ENCODE measurements at regions of chr6 and their contacts with region 1.

Region 1: GRCh38 chr6:137641474-137642077 is 147.4 kb upstream of the OLIG3 start:
- DNase-seq: peak; percentile 37 to 75
- ATAC-seq: peak in 7 of 8 donors; percentile 83 to 94 (median 91)
- H3K4me3 ChIP-seq: no peak overlapping the region
- H3K27ac ChIP-seq: no peak overlapping the region
- H3K4me1 ChIP-seq: peaks cover 0 to 12% (median 4%) of the 10 kb centered on the region in 9 donors
- H3K27me3 ChIP-seq: no peaks in the 10 kb centered on the region
- CTCF ChIP-seq: peak; percentile 26 to 78 (median 67)

Region 2: GRCh38 chr6:136967876-136968752 is 673.5 kb before region 1 on chr6:
- intact Hi-C with region 1: loop called in 2 of 10 experiments (anchors 2 to 10 kb)
- DNase-seq: peak; percentile 50 to 61
- ATAC-seq: peak; percentile 69 to 88 (median 78)
- H3K4me3 ChIP-seq: no peak overlapping the region
- H3K27ac ChIP-seq: peak overlapping the region in 5 of 10 donors; percentile 2 to 78 (median 48)
- H3K4me1 ChIP-seq: peaks cover 0 to 20% (median 13%) of the 10 kb centered on the region in 9 donors
- H3K27me3 ChIP-seq: peaks cover 0 to 8% (median 0%) of the 10 kb centered on the region in 7 donors
- CTCF ChIP-seq: peak; percentile 43 to 74 (median 64)

Region 3: DNA sequence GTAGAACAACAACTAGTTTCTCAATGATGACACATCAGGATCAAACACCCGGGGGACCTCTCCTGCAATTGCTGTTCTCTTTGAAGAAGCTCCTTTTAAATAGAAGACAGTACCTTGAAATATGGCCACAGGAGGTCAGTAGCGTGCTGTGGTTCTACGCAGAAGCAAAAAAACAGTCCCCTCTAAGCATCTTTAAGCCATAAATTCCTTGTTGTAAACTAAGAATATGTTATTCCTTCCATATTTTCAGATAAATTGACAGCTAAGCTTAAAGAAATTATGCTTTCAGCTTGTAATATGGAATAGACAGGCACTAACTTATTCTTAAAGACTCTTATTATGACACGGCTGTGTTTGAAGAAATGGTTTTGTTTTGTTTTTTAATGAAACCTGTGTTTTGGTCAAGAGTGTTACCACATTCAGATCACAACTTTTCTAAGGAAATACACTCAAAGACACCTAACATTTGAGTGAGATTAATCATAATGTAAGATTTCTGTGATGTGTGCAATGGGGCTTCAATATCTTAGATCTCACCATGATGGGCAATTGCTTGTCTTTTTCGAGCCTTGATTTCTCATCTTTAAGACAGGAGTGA is 547.1 kb before region 1 on chr6:
- intact Hi-C with region 1: loop called in 8 of 10 experiments (anchors 1 to 5 kb)
- DNase-seq: peak in 1 of 2 donors; percentile 70
- ATAC-seq: peak in 7 of 8 donors; percentile 63 to 79 (median 74)
- H3K4me3 ChIP-seq: no peak overlapping the region
- H3K27ac ChIP-seq: no peak overlapping the region
- H3K4me1 ChIP-seq: peaks cover 0 to 15% (median 0%) of the 10 kb centered on the region in 9 donors
- H3K27me3 ChIP-seq: no peaks in the 10 kb centered on the region
- CTCF ChIP-seq: peak; percentile 58 to 90 (median 80)

Region 4: GRCh38 chr6:137271245-137272183 is 370.1 kb before region 1 on chr6:
- intact Hi-C with region 1: loop called in 9 of 10 experiments (anchors 2 to 10 kb)
- DNase-seq: no peak
- ATAC-seq: peak in 7 of 8 donors; percentile 63 to 82 (median 73)
- H3K4me3 ChIP-seq: no peak overlapping the region
- H3K27ac ChIP-seq: no peak overlapping the region
- H3K4me1 ChIP-seq: peaks cover 0 to 14% (median 0%) of the 10 kb centered on the region in 9 donors
- H3K27me3 ChIP-seq: no peaks in the 10 kb centered on the region
- CTCF ChIP-seq: peak; percentile 76 to 97 (median 93)

Region 5: DNA sequence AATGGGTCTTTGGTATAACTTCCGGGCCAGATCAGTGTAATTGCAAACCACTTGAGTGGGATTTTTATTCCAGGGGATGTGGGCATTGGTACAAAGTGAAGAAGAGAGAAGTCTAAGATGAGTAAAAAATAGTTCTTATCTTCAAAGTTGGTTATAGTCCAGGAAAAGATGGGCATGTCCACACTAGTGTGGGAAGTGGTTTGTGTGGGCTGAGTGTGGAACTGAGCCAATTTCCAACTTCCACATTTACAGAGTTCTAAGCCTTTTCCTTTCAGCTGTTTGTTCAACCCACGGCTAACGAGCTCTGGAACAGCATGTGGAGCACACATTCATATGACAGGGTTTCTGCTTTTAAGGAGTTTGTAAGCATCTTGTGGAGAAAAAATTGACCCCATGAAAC is 350.1 kb before region 1 on chr6:
- intact Hi-C with region 1: loop called in 1 of 10 experiments (anchors 10 kb)
- DNase-seq: peak in 1 of 2 donors; percentile 59
- ATAC-seq: peak in 7 of 8 donors; percentile 75 to 87 (median 81)
- H3K4me3 ChIP-seq: no peak overlapping the region
- H3K27ac ChIP-seq: no peak overlapping the region
- H3K4me1 ChIP-seq: peaks cover 0 to 22% (median 3%) of the 10 kb centered on the region in 9 donors
- H3K27me3 ChIP-seq: no peaks in the 10 kb centered on the region
- CTCF ChIP-seq: no peak

Region 6: DNA sequence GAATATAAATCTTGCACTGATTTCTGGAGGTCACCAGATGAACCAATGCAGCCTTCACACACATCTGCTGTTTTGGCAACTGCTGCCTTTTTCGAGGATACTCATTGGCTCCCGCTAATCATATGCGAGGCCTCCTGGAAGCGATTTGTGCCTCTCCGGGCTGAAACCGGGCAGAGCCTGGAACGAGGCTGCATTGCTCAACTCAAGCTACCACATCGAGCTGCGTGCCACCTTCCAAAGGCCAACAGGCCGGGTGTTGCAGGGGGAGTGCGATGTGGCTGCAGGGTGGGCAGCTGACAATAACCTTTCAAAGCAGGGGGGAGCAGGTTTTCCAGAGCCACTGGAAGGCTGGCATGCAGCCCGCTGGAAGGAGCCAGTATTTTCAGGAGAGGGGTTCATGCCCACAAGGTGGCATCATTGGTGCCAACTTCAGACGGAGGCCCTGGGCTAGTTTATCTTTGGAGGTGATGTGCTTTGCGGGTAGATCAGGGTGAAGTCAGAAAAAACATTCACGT is 299.8 kb before region 1 on chr6:
- intact Hi-C with region 1: loop called in 1 of 10 experiments (anchors 10 kb)
- DNase-seq: peak; percentile 6 to 23
- ATAC-seq: peak in 6 of 8 donors; percentile 22 to 63 (median 38)
- H3K4me3 ChIP-seq: no peak overlapping the region
- H3K27ac ChIP-seq: no peak overlapping the region
- H3K4me1 ChIP-seq: peaks cover 0 to 14% (median 0%) of the 10 kb centered on the region in 9 donors
- H3K27me3 ChIP-seq: peaks cover 0 to 4% (median 0%) of the 10 kb centered on the region in 7 donors
- CTCF ChIP-seq: peak in 3 of 9 donors; percentile 14 to 45 (median 22)